Mucosa of descending colon (tissue), 3 donors: ENCODE measurements at regions of chr6 and their contacts with region 1.

Region 1: DNA sequence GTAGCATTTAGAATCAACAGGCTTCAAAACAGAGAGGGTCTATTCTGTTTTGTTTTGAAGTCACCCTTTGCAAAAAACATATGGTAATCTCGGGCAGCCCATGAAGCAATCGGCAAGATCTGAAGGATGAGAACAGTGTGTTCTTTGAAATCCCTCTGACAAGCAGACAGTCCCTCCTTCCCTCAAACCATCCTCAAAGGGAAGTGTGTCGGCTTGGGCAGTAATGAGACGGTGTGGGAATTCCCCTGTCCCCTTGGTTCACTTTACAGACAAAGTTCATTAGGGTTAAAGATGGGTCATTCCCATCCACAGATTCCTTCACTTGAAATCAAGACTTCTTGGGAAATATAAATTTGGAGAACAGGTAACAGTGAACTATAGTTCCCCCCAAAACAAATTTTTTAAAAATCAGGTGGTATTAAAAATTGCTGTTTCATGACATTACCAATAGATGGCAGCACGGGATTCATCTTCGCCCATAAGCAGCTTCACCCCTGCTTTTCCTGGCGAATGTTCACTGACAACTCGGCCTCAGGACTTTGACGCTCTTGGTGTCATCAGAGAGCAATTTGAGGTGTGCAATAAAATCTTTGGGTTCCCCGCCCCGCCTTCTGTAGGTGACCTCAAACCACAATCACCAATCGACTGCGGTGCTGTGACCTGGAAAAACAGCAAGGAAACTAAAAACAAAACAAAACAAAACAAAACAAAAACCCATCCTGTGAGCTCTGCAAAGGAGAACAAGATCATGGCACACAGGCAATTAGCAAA is 159.3 kb upstream of the TNFAIP3 start:
- DNase-seq: peak; percentile 69 to 83 (median 73)
- ATAC-seq: peak; percentile 89
- H3K4me3 ChIP-seq: no peak overlapping the region
- H3K4me1 ChIP-seq: no peaks in the 10 kb centered on the region
- CTCF ChIP-seq: peak; percentile 56

Region 2: DNA sequence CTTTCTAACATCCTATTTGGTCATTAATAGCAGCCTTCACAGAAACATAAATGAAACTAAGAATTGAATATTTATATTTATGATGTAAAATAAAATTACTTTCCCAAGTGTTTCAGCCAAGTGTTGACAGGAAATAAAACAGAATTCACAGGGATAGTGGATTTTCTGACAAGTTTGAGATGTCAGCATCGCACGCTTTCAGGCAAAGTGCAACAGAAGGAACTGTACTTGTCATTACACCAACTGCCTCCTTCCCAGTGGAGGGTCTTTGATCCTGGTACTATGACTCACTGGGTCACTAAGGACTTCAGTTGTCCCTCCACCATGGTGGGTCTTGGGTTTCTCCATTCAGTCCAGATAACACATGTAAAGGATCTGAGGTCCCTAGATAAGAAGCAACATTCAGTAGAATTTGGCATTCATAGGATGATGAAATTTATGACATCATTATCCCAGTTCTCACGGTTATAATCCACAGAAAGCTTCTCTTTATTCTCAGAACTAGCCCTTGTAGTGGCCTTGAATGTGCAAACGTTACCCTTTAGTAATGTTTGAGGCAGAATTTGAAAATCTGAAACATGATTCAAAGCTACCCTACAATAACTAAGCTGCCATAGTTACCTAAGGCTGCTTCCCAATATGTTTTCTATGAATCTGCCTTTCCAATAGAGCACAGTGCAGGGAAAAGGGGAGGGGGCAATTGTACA is 155.5 kb after region 1 on chr6:
- intact Hi-C with region 1: no loop called
- DNase-seq: no peak
- ATAC-seq: no peak
- H3K4me3 ChIP-seq: no peak overlapping the region
- H3K4me1 ChIP-seq: peaks cover 6% of the 10 kb centered on the region
- CTCF ChIP-seq: no peak

Region 3: DNA sequence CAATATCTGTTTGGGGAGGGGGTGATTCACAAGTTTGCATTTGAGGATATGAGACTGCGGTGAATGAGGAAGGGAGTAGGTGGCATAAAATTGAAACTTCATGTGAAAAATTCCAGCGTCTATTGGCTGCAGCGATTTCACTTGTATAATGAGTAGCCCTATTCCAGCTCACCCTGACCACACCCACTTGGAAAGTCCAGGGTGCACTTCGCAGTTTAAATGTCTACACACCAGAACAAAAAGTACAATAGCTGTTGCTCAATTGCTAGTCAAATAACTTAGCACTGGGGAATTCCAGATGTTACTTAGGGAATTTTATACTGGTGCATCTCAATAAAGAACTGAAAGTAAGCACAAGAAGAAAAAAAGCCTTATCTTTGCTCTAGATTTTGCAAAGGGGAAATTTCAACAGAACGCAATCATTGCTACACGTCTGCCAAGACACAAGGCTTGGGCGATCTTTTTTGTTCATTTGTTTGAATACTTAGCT is 165.5 kb after region 1 on chr6:
- intact Hi-C with region 1: loop called in 1 of 2 experiments (anchors 5 kb)
- DNase-seq: peak; percentile 58 to 88 (median 69)
- ATAC-seq: peak; percentile 91
- H3K4me3 ChIP-seq: no peak overlapping the region
- H3K4me1 ChIP-seq: peaks cover 36% of the 10 kb centered on the region
- CTCF ChIP-seq: no peak

Region 4: GRCh38 chr6:137944793-137945498 is 237.2 kb after region 1 on chr6:
- intact Hi-C with region 1: loop called (anchors 5 kb)
- DNase-seq: no peak
- ATAC-seq: peak; percentile 75
- H3K4me3 ChIP-seq: no peak overlapping the region
- H3K4me1 ChIP-seq: peaks cover 4% of the 10 kb centered on the region
- CTCF ChIP-seq: no peak